Psoas muscle (tissue), 8 donors: ENCODE measurements at regions of chr18 and their contacts with region 1.

Region 1: DNA sequence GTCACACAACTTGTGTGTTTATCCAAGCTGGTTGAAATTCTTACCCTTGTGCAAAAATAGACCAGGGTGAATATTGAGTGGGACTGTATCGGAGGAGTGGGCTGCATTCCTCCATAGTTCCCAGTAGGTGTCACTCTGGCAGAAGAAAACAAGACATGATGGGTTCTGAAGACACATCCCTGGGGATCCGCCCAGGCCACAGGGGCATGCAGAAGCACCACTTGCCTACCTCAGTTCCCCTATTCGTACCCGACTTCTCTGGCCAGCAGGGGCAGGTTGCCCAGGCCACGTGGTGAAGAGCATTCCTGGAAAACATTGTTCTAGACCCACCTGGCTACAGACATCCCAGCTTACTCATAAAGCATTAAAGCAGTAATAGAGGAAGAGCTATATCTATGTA is 168.2 kb downstream of the FAM210A start:
- DNase-seq: no peak
- ATAC-seq: peak; percentile 83 to 93 (median 90)
- H3K4me3 ChIP-seq: no peak overlapping the region
- H3K27ac ChIP-seq: no peak overlapping the region
- H3K4me1 ChIP-seq: peaks cover 7% of the 10 kb centered on the region
- H3K27me3 ChIP-seq: no peaks in the 10 kb centered on the region
- CTCF ChIP-seq: peak; percentile 66

Region 2: DNA sequence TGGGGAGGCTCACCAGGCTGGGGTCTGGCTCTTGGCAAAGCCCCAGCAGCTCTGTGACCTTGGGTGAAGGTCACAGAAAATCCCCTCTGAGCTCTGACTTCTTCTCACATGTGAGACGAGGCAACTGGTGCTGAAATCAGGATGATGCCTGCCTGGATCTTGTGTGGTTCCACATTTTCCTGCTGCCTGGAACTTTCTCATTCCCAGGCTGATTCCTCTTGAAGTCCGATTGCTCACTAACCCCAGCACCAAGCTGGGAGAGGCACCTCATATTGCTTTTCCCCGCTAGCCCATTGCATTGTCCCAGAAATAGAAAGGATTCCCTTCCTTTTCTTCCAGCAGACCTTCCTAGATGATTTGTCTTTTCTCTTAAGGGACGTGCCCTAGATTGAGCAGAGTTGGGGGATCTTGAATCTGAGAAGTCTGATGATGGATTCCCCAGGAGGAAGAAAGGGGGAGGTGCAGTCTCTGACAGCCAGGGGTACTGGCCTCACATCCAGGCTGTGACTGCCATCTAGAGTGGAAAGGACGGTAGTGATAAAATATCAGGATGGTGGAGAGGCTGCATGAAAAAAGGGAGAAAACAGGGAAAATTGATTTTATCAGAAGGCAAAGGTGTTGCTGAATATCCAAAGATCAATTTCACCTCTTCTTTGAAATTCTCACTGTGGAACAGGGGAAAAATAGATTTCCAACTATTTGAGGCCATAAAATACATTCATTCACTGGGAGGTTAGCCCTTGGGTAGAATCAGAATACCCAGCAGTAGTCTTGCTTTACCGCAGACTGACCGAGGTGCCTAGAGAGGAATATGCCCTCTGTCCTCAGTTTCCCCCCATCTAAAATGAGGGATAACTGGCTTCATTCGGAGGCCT is 72.0 kb after region 1 on chr18:
- intact Hi-C with region 1: loop called (anchors 2 to 5 kb)
- DNase-seq: no peak
- ATAC-seq: peak; percentile 75 to 95 (median 90)
- H3K4me3 ChIP-seq: no peak overlapping the region
- H3K27ac ChIP-seq: no peak overlapping the region
- H3K4me1 ChIP-seq: no peaks in the 10 kb centered on the region
- H3K27me3 ChIP-seq: no peaks in the 10 kb centered on the region
- CTCF ChIP-seq: peak; percentile 76

Region 3: DNA sequence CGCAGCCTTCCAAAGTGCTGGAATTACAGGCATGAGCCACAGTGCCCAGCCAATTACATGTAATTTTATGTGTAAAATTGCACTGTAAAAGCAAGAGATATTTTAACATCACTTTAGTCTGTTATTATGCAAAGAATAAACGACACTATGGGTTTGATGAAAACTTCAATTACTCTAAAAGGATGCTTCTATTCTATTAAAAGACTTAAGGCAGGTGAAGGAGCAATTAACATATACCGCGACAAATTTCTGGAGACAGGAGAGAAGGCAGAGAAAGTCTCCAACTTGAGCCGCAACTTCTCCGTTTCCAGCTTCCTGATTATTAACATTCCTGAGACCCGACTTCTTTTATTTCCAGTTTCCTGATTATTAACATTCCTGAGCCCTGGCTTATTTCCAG is 114.5 kb after region 1 on chr18:
- intact Hi-C with region 1: no loop called
- DNase-seq: no peak
- ATAC-seq: no peak
- H3K4me3 ChIP-seq: no peak overlapping the region
- H3K27ac ChIP-seq: no peak overlapping the region
- H3K4me1 ChIP-seq: peaks cover 5% of the 10 kb centered on the region
- H3K27me3 ChIP-seq: no peaks in the 10 kb centered on the region
- CTCF ChIP-seq: no peak

Region 4: GRCh38 chr18:13726232-13726971 is 168.3 kb after region 1 on chr18 and contains the starts of genes FAM210A and RNMT:
- intact Hi-C with region 1: loop called (anchors 5 to 10 kb)
- DNase-seq: peak; percentile 96 to 98
- ATAC-seq: peak; percentile 96 to 98 (median 98)
- H3K4me3 ChIP-seq: peak within 1 kb of the TSS; percentile 98
- H3K27ac ChIP-seq: peak within 1 kb of the TSS; percentile 100
- H3K4me1 ChIP-seq: peaks cover 20% of the 10 kb centered on the region
- H3K27me3 ChIP-seq: no peaks in the 10 kb centered on the region
- CTCF ChIP-seq: no peak
- total RNA-seq, gene FAM210A: 24.7 to 43.1 (median 26.9) TPM
- total RNA-seq, gene RNMT: 19.2 to 29.2 (median 25.7) TPM

Region 5: GRCh38 chr18:13800505-13801259 is 242.6 kb after region 1 on chr18:
- intact Hi-C with region 1: loop called in 1 of 2 experiments (anchors 10 kb)
- DNase-seq: peak; percentile 60 to 69
- ATAC-seq: peak; percentile 81 to 92 (median 82)
- H3K4me3 ChIP-seq: peak overlapping the region; percentile 55
- H3K27ac ChIP-seq: no peak overlapping the region
- H3K4me1 ChIP-seq: no peaks in the 10 kb centered on the region
- H3K27me3 ChIP-seq: peaks cover 0 to 23% (median 5%) of the 10 kb centered on the region in 3 donors
- CTCF ChIP-seq: peak; percentile 47